Dorsolateral prefrontal cortex (tissue), 120 donors: ENCODE measurements at regions of chr4 and their contacts with region 1.

Region 1: GRCh38 chr4:95165926-95166524 is 382.7 kb downstream of the UNC5C start:
- DNase-seq: peak in 2 of 10 donors; percentile 14 to 58
- H3K4me3 ChIP-seq: no peak overlapping the region
- H3K27ac ChIP-seq: peak overlapping the region in 57 of 59 donors; percentile 11 to 99 (median 92)
- H3K27me3 ChIP-seq: no peaks in the 10 kb centered on the region
- CTCF ChIP-seq: peak; percentile 72 to 94 (median 83)

Region 2: DNA sequence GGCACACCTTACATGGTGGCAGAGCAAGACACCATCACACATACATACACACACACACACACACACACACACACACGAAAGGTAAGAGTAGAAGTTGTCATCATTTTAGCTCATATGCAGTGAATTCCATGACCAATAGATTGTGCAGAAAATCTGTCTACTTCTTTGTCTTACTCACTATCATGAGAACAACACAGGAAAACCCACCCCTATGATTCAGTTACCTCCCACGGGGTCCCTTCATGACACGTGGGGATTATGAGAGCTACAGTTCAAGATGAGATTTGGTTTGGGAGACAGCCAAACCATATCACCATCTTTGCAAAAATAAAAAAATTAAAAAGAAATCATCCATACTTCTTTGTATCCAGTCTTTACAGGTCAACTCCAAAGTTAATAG is 187.1 kb before region 1 on chr4:
- intact Hi-C with region 1: no loop called
- DNase-seq: no peak
- H3K4me3 ChIP-seq: no peak overlapping the region
- H3K27ac ChIP-seq: no peak overlapping the region
- H3K27me3 ChIP-seq: peaks cover 0 to 4% (median 0%) of the 10 kb centered on the region in 45 donors
- CTCF ChIP-seq: no peak

Region 3: DNA sequence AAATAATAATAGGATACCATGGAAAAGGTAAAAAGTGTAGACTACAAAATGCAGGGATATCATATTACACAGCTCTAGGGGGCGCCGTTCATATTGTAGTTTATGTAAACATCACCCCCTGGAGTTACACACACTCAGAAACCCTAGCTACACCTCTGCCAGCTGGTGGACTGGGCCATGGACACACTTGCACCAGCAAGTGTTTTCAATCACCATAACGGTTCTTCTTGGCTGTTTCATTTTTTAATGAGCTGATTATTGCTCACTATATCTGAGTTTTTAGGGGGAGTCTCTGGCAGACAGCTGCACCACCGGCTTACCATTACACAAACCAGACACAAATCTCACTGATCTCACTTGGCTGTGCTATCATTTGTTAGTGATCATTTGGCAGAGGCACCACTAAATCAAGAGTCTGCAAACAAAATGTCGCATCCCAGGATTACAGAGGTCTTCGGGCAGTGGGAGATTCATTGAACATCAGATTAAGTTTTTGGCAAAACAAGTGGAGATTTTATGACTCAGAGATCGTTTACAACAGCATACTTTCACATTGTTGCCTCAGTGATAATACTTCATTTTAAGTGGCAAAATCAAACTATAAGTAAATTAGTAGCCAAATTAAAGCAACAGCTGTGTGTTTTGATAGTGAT is 197.0 kb after region 1 on chr4:
- intact Hi-C with region 1: loop called in 1 of 2 experiments (anchors 5 kb)
- DNase-seq: peak in 1 of 10 donors; percentile 54
- H3K4me3 ChIP-seq: peak overlapping the region in 47 of 59 donors; percentile 0 to 58 (median 26)
- H3K27ac ChIP-seq: peak overlapping the region; percentile 29 to 90 (median 81)
- H3K27me3 ChIP-seq: no peaks in the 10 kb centered on the region
- CTCF ChIP-seq: peak in 49 of 56 donors; percentile 15 to 66 (median 43)

Region 4: GRCh38 chr4:95528388-95528948 is 362.4 kb after region 1 on chr4:
- intact Hi-C with region 1: loop called in 1 of 2 experiments (anchors 5 kb)
- DNase-seq: no peak
- H3K4me3 ChIP-seq: no peak overlapping the region
- H3K27ac ChIP-seq: peak overlapping the region in 18 of 59 donors; percentile 0 to 99 (median 22)
- H3K27me3 ChIP-seq: no peaks in the 10 kb centered on the region
- CTCF ChIP-seq: no peak

Region 5: DNA sequence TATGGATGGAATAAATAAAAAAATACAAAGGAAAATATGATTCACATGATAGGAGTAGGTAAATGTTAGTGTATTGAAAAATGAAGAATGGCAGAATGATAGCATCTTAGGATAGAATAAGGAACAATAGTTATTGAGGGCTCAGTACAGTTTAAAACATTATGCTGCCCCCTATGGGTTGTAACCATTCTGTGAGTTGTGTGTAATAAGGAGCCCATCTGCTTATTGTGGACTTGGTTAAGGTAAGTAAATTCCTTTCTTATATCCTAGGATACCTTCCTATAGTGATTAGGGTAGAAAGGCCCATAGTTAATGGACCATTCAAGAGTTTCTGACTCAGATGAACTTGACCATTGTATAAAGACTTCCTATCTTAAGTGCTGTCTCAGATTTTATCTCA is 869.7 kb after region 1 on chr4:
- intact Hi-C with region 1: loop called in 1 of 2 experiments (anchors 5 kb)
- DNase-seq: no peak
- H3K4me3 ChIP-seq: no peak overlapping the region
- H3K27ac ChIP-seq: no peak overlapping the region
- H3K27me3 ChIP-seq: no peaks in the 10 kb centered on the region
- CTCF ChIP-seq: peak; percentile 31 to 83 (median 58)